Caco-2 (cell line): ENCODE measurements at regions of chr3 and their contacts with region 1.

Region 1: GRCh38 chr3:71247221-71247976 is 336.1 kb downstream of the FOXP1 start:
- DNase-seq: peak; percentile 75 to 88
- H3K4me3 ChIP-seq: no peak overlapping the region
- H3K4me3 Mint-ChIP-seq: peak overlapping the region; percentile 24
- H3K27ac Mint-ChIP-seq: peak overlapping the region; percentile 83
- H3K4me1 ChIP-seq: peaks cover 69% of the 10 kb centered on the region
- H3K4me1 Mint-ChIP-seq: peaks cover 57% of the 10 kb centered on the region
- H3K27me3 ChIP-seq: no peaks in the 10 kb centered on the region
- H3K27me3 Mint-ChIP-seq: no peaks in the 10 kb centered on the region
- CTCF ChIP-seq: no peak

Region 2: DNA sequence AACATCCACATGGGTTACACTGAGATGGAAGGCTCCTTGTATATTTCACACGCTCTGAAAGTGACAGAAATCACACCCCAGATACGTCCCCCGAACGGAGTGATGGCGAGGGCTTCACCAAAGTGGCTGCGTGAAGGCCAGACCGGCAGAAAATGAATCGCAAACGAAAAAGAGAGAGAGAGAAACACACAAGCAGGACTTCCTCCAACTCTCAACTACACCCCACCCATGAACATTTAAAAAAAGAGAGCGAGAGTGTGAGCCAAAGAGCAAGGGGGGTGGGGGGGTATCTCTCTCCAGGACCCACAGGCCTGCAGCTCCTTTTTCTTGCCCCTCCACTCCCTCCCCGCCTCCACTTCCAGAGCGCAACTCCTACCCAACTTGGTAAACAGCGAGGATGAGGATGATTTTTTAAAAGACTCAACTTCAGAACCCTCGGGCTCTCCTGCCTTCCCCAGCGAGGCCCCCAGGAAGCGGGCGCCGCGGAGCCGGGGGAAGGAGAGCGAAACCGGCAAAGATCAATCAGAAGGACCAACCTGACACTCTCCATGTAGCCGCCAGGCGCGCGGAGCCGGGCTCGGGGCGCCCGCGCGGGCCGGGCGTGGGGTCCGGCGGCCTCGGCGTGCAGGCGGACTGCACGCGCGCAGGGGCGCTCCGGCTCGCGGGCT is 183.0 kb before region 1 on chr3:
- CTCF ChIA-PET with region 1: interaction called, 4 read pairs
- POLR2A ChIA-PET with region 1: no interaction called
- intact Hi-C with region 1: loop called (anchors 2 kb)
- DNase-seq: peak; percentile 56 to 70
- H3K4me3 ChIP-seq: peak overlapping the region; percentile 58
- H3K4me3 Mint-ChIP-seq: no peak overlapping the region
- H3K27ac Mint-ChIP-seq: no peak overlapping the region
- H3K4me1 ChIP-seq: peaks cover 55% of the 10 kb centered on the region
- H3K4me1 Mint-ChIP-seq: peaks cover 44% of the 10 kb centered on the region
- H3K27me3 ChIP-seq: no peaks in the 10 kb centered on the region
- H3K27me3 Mint-ChIP-seq: no peaks in the 10 kb centered on the region
- CTCF ChIP-seq: no peak

Region 3: GRCh38 chr3:71149959-71150954 is 97.1 kb before region 1 on chr3:
- CTCF ChIA-PET with region 1: no interaction called
- POLR2A ChIA-PET with region 1: no interaction called
- intact Hi-C with region 1: loop called (anchors 1 kb)
- DNase-seq: no peak
- H3K4me3 ChIP-seq: no peak overlapping the region
- H3K4me3 Mint-ChIP-seq: no peak overlapping the region
- H3K27ac Mint-ChIP-seq: no peak overlapping the region
- H3K4me1 ChIP-seq: peaks cover 59% of the 10 kb centered on the region
- H3K4me1 Mint-ChIP-seq: peaks cover 49% of the 10 kb centered on the region
- H3K27me3 ChIP-seq: no peaks in the 10 kb centered on the region
- H3K27me3 Mint-ChIP-seq: no peaks in the 10 kb centered on the region
- CTCF ChIP-seq: no peak

Region 4: GRCh38 chr3:71229905-71230657 is 17.3 kb before region 1 on chr3:
- CTCF ChIA-PET with region 1: interaction called, 5 read pairs
- POLR2A ChIA-PET with region 1: interaction called, 3 read pairs
- intact Hi-C with region 1: loop called (anchors 2 kb)
- DNase-seq: no peak
- H3K4me3 ChIP-seq: no peak overlapping the region
- H3K4me3 Mint-ChIP-seq: no peak overlapping the region
- H3K27ac Mint-ChIP-seq: no peak overlapping the region
- H3K4me1 ChIP-seq: peaks cover 5% of the 10 kb centered on the region; the same call in 1 of the 2 replicates
- H3K4me1 Mint-ChIP-seq: peaks cover 11% of the 10 kb centered on the region
- H3K27me3 ChIP-seq: no peaks in the 10 kb centered on the region
- H3K27me3 Mint-ChIP-seq: no peaks in the 10 kb centered on the region
- CTCF ChIP-seq: no peak

Region 5: DNA sequence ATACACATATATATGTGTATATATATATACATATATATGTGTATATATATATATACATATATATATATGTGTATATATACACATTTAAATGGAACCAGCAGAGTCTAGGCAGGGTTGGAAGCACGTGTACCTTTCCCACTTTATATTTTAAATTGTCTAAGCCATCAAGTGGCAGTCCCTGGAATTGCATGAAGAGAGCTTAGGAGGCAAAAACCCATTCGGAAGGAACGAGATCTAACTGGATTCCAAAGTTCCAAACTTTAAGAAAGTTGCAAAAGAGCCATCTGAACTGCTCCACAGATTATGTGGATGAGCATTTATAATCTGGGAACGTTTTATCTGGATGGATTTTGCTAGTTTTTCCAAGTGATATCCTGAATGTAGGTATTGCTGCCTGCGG is 149.6 kb after region 1 on chr3:
- CTCF ChIA-PET with region 1: no interaction called
- POLR2A ChIA-PET with region 1: no interaction called
- intact Hi-C with region 1: loop called (anchors 5 kb)
- DNase-seq: peak in 1 of 2 experiments; percentile 45
- H3K4me3 ChIP-seq: no peak overlapping the region
- H3K4me3 Mint-ChIP-seq: no peak overlapping the region
- H3K27ac Mint-ChIP-seq: no peak overlapping the region
- H3K4me1 ChIP-seq: peaks cover 32% of the 10 kb centered on the region
- H3K4me1 Mint-ChIP-seq: peaks cover 22% of the 10 kb centered on the region
- H3K27me3 ChIP-seq: no peaks in the 10 kb centered on the region
- H3K27me3 Mint-ChIP-seq: no peaks in the 10 kb centered on the region
- CTCF ChIP-seq: peak; percentile 34 to 50